AG04450 (cell line): ENCODE measurements at regions of chr19 and their contacts with region 1.

Region 1: GRCh38 chr19:20078581-20079031 is 806 bp downstream of the ZNF90 start:
- DNase-seq: no peak
- H3K4me3 ChIP-seq: peak overlapping the region; percentile 68
- H3K27ac ChIP-seq: peak overlapping the region; percentile 52
- H3K27me3 ChIP-seq: no peaks in the 10 kb centered on the region
- CTCF ChIP-seq: no peak

Region 2: DNA sequence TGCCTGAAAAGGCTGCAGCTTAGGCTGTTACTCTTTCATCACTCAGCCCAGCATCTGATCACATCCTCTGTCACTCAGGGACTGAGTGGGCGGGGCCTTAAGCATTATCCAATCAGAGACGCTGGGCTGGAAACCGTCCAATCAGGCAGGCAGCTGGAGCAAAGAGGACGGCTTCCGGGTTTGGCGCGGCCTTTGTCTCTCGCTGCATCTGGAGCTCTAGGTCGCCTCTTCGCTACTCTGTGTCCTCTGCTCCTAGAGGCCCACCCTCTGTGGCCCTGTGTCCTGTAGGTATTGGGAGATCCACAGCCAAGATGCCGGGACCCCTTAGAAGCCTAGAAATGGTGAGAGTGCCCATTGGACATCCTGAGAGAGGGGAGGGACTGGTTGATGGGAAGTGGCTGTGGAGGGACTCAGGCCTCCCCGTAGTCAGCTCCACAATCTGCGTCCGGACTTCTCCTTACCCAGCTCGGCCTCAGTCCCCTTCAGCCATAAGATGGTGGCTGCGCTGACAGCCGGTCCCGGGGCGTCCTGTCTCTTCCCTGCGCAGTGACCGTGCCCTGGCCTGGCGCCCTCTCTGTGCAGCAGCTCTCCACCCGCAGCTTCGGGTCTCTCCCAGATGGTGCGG is 88.5 kb after region 1 on chr19 and contains the start of gene ZNF486:
- CTCF ChIA-PET with region 1: no interaction called
- POLR2A ChIA-PET with region 1: interaction called, 10 read pairs
- DNase-seq: peak; percentile 91
- H3K4me3 ChIP-seq: peak within 1 kb of the TSS; percentile 90
- H3K27ac ChIP-seq: peak within 1 kb of the TSS; percentile 84
- H3K27me3 ChIP-seq: no peaks in the 10 kb centered on the region
- CTCF ChIP-seq: no peak
- polyA plus RNA-seq, gene ZNF486: 3.8 and 5.3 TPM in 2 replicates

Region 3: DNA sequence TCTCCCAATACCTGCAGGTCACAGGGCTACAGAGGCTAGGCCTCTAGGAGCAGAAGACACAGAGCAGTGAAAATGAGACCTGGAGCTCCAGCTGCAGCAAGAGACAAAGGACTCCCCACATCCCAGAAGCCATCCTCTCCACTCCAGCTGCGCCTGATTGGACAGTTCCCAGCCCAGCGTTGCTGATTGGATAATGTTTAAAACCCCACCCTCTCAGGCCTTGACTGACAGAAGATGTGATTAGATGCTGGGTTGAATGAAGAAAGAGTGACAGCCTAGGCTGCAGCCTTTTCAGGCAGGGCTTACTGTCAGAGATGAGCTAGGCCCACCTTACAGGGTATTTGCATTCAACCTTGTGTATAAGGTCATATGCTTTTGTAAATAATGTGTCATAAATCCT is 1191.2 kb after region 1 on chr19:
- CTCF ChIA-PET with region 1: no interaction called
- POLR2A ChIA-PET with region 1: interaction called, 13 read pairs
- DNase-seq: no peak
- H3K4me3 ChIP-seq: no peak overlapping the region
- H3K27ac ChIP-seq: no peak overlapping the region
- H3K27me3 ChIP-seq: no peaks in the 10 kb centered on the region
- CTCF ChIP-seq: no peak